Activated naive CD8-positive, alpha-beta T cell treated with anti-CD3 and anti-CD28 coated beads, Interleukin-2, amount 10 ng/mL, durations not matched to agents 7 days and 5 days (primary cell): ENCODE measurements at regions of chr2 and their contacts with region 1.

Region 1: DNA sequence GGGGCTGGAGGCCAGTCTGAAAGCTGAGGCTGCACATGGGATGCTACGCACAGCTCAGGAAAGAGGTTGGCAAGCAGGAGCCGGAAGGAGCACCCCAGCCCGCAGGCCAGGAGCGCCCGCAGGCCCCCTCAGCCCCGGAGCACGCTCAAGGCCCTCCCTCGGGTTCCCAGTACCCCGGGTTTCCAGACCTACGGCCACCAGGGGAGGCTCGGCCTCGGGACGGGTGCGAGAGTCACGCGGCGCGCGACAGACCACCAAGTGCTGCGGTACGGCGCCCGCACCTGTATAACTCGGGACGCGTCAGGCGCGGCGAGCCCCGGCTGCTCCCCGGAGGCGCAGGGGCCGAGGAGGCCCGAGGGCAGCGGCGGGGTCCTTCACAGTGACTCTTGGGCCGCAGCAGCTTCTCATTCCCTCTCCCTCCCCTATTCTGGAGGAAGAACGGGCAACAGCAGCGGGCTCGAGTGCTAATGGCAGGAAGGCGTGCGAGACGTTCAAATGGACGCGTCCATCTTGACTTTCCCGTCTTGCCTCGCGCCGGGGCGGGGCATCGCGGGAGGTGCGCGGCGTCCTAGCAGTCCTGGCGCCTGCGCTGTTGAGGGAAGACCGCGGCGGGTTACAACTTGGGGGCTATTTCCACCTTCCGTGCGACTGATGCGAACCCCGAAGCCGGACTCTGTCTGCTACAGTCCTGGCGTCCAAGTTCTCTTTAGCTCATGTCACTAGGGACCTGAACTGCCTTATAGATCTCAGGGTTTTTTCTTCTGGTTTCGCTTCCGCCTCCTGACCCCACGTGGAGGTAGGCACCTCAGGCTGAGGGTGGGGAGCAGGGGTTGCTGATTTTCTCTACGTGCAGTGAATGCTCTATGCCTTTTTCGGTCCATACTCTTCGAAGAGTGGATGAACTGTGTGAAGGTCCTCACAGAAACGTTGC is at the start of gene ANAPC1:
- DNase-seq: peak; percentile 90
- ATAC-seq: peak; percentile 95
- H3K4me3 Mint-ChIP-seq: peak within 1 kb of the TSS; percentile 96
- H3K27ac Mint-ChIP-seq: peak within 1 kb of the TSS; percentile 88
- H3K4me1 Mint-ChIP-seq: peaks cover 16% of the 10 kb centered on the region
- H3K27me3 Mint-ChIP-seq: no peaks in the 10 kb centered on the region
- total RNA-seq, gene ANAPC1: 55.9 to 58.8 TPM

Region 2: GRCh38 chr2:112054847-112055729 is 171.2 kb after region 1 on chr2 and contains the start of gene TMEM87B:
- POLR2A ChIA-PET with region 1: interaction called, 15 read pairs
- DNase-seq: peak; percentile 96
- ATAC-seq: peak; percentile 75
- H3K4me3 Mint-ChIP-seq: peak within 1 kb of the TSS; percentile 100
- H3K27ac Mint-ChIP-seq: peak within 1 kb of the TSS; percentile 100
- H3K4me1 Mint-ChIP-seq: peaks cover 28% of the 10 kb centered on the region
- H3K27me3 Mint-ChIP-seq: peaks cover 3% of the 10 kb centered on the region
- total RNA-seq, gene TMEM87B: 20.1 to 24.2 TPM